Mammary epithelial cell (primary cell): ENCODE measurements at regions of chr11 and their contacts with region 1.

Region 1: DNA sequence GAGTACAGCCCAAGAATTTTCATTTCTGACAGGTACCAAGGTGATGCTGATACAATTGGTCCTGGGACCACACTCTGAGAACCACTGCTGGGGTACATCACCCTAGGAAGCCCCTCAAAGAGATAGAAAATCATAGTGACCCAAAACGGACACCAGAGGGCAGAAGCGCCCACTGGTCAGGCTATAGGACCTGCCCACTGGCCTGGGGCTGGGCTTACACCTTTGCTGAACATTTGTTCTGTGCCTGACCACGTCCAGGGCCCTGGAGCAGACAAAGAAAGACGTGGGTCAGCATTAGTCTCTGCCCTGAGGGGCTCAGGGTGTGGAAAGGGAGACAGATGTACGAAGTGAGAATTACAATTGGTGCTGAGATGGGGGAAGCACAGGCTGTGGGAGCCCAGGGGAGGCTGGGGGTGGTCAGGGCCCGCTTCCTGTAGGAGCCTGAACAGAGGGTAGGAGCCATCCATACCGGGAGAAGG is 14.4 kb upstream of the SERPINH1 start:
- DNase-seq: no peak
- H3K4me3 ChIP-seq: no peak overlapping the region
- H3K27ac ChIP-seq: no peak overlapping the region
- H3K4me1 ChIP-seq: no peaks in the 10 kb centered on the region
- H3K27me3 ChIP-seq: no peaks in the 10 kb centered on the region
- CTCF ChIP-seq: peak; percentile 76 to 90

Region 2: DNA sequence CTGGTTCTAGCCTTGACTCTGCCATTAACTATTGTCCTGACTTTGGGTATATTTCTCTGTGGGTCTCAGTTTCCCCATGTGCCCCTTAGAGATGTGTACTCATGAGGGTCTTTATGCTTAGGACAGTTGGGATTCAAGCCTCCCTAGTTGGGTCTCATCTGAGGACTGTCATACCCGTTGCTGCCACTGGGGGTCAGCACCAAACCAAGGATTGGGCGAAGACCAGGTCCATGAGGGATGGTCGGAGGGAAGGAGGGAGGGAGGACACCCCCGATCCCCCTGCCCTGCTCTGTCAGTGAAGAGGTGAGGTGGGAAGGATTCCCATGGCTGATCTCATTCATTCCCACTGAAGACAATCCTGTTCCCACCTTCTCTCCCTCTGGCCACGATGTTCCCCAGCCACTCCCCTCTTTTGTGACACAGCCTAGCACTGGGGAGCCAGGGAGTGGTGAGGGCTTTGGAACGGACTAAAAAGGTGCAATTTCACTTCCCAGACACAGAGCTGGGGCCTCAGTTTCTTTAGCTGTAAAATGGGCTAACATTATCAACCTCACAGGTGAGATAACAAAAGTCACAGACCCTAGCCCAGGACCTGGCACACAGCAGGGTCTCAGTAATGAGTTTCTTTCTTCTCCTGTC is 102.2 kb before region 1 on chr11:
- CTCF ChIA-PET with region 1: no interaction called
- dilution Hi-C with region 1: no loop called
- in situ Hi-C with region 1: no loop called
- intact Hi-C with region 1: no loop called
- DNase-seq: peak; percentile 27
- H3K4me3 ChIP-seq: no peak overlapping the region
- H3K27ac ChIP-seq: no peak overlapping the region
- H3K4me1 ChIP-seq: peaks cover 8% of the 10 kb centered on the region
- H3K27me3 ChIP-seq: no peaks in the 10 kb centered on the region
- CTCF ChIP-seq: peak; percentile 92 to 98

Region 3: DNA sequence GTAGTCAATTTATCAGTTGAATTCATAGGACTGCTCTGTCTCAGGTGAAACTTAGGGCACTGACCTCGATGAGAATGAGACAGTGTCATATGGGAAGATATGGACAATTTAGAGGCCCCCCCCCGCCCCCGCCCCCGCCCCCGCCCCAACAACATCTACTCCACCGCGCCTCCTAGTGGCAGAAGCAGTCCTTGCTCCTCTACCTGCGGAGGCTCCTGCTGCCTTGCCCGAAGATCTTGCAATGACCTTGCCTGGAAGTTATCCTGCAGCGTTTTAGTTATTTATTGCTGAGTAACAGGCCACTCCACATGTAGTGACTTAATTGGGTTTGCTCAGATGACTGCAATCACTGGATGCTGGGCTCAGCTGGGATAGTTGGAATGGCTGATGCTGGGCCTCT is 29.6 kb after region 1 on chr11:
- CTCF ChIA-PET with region 1: interaction called, 3 read pairs
- dilution Hi-C with region 1: no loop called
- in situ Hi-C with region 1: no loop called
- intact Hi-C with region 1: loop called (anchors 1 kb)
- DNase-seq: no peak
- H3K4me3 ChIP-seq: no peak overlapping the region
- H3K27ac ChIP-seq: no peak overlapping the region
- H3K4me1 ChIP-seq: no peaks in the 10 kb centered on the region
- H3K27me3 ChIP-seq: no peaks in the 10 kb centered on the region
- CTCF ChIP-seq: peak; percentile 50 to 57

Region 4: DNA sequence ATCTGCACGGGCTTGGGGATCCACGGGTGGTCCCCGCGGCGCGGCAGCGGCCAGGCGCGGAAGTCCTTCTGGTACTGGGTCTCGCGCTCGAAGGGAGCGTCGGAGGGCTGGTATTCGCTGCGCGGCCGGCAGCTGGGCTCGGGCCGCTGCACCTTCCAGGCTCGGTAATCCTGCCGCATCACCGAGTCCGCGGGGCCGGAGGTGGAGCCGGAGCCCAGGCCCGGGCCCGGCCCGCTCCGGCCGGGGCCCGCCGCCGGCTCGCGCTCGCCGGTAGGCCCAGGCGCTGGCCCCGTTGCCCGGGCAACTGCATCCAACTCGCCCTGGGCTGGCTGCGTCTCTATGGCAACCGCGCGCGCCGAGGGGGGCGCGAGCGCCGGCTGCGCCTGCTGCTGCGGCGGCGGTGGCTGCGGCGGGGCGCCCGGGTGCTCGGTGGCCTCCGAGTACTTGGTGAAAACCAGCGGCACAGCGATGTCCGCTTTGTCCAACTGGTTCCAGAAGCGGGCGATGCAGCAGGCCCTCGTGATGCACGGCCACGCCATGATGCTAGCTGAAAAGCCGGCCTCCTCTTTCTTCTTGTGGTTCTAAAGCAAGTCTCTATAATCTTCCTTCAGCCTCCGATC is 120.3 kb after region 1 on chr11:
- CTCF ChIA-PET with region 1: no interaction called
- dilution Hi-C with region 1: no loop called
- in situ Hi-C with region 1: no loop called
- intact Hi-C with region 1: loop called (anchors 2 kb)
- DNase-seq: peak; percentile 8
- H3K4me3 ChIP-seq: peak overlapping the region; percentile 25 to 53 (median 44)
- H3K27ac ChIP-seq: no peak overlapping the region
- H3K4me1 ChIP-seq: peaks cover 16% of the 10 kb centered on the region
- H3K27me3 ChIP-seq: peaks cover 6% of the 10 kb centered on the region
- CTCF ChIP-seq: no peak

Region 5: DNA sequence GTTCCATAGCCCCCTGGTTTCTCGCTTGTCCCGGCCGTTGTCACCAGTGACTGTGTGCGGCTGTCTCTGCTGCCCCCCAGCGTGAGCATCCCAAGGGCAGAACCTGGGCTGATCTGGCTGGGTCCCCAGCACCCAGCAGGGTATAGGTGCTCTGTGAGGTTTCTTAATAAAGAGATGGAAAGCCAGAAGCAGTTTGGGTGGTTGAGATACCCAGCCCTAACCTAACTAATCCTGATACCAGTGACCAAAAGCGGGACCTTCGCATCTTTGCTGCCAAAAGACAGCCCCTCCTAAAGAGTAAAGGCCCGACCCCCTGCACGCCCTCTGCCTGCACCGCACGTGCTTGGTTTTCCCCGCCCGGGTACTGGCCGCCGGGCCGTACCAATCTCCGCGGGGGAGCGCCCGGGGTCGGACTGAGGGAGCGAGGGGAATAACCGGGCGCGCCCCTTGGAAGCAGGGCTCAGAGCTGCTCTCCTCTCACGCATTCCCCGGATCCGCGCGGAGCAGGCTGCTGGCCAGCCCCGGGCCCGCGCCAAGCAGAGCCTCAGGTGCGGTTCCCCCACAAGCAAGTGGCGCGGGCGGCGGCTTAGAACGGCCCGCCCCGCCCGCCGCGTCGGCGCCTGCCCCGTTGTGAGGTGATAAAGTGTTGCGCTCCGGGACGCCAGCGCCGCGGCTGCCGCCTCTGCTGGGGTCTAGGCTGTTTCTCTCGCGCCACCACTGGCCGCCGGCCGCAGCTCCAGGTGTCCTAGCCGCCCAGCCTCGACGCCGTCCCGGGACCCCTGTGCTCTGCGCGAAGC is 220.7 kb after region 1 on chr11 and contains the start of gene DGAT2:
- CTCF ChIA-PET with region 1: no interaction called
- dilution Hi-C with region 1: no loop called
- in situ Hi-C with region 1: no loop called
- intact Hi-C with region 1: loop called (anchors 1 kb)
- DNase-seq: peak; percentile 63
- H3K4me3 ChIP-seq: peak within 1 kb of the TSS; percentile 36 to 54 (median 44)
- H3K27ac ChIP-seq: no peak within 1 kb of the TSS
- H3K4me1 ChIP-seq: peaks cover 24% of the 10 kb centered on the region
- H3K27me3 ChIP-seq: peaks cover 6% of the 10 kb centered on the region
- CTCF ChIP-seq: peak in 1 of 2 donors; percentile 10
- total RNA-seq, gene DGAT2: 2.0 to 2.6 TPM

Region 6: DNA sequence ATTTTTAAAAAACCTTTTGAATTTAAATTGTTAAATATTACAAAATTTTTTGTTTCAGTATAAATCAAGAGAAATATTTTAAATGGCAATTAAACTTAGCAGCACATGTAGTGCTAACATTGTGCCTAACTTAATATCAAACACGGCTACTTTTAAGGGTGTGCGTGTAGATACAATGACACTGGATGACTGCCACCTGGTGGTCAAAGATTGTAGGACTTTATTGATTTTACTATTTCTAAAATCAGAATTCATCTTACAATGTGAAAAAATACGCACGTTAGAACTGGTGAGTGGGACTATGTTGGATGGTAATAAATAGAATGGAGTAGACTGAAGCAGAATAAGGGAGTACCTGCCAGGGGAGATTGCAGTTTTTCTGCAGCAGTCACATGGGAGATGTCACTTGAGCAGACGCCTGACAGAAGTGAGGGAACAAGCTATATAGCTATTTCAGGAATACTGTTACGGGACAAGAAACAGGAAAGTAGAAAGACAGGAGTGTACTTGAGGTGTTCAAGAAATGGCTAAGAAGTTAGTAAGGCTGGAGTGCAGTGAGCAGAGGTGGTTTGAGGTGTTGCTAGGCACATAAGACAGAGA is 320.3 kb after region 1 on chr11:
- CTCF ChIA-PET with region 1: no interaction called
- dilution Hi-C with region 1: no loop called
- in situ Hi-C with region 1: no loop called
- intact Hi-C with region 1: loop called (anchors 5 kb)
- DNase-seq: peak; percentile 11
- H3K4me3 ChIP-seq: no peak overlapping the region
- H3K27ac ChIP-seq: no peak overlapping the region
- H3K4me1 ChIP-seq: no peaks in the 10 kb centered on the region
- H3K27me3 ChIP-seq: no peaks in the 10 kb centered on the region
- CTCF ChIP-seq: peak; percentile 67 to 72

Region 7: DNA sequence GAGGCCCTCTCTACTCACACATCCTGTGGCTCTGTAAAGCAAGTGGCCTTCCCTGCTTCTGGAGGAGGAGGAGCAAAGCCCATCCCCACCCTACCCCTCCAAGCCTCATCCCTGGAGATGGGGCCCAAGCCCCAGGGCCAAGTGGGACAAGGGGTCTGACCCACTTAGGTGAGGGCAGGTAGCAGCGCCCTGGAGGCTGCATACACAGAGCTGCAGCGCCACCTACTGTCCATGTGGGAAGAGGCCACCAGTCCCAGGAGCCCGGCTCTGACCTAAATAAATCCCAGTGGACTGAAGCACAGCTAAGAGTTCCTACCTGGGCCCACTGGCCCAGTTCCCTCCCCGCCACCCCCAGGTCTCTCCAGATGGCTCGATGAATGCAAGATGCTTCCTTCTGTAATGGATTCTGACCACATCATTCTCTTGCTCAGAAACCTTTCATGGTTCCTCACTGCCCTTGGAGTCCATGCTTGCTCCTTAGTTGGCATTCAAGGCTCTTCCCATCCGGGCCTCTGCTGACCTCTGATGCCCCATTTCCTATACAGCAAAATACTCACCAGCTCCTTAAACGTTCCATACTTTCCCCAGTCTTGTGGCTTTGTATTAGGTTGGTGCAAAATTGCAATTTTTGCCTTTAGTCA is 771.2 kb after region 1 on chr11:
- CTCF ChIA-PET with region 1: no interaction called
- dilution Hi-C with region 1: no loop called
- in situ Hi-C with region 1: no loop called
- intact Hi-C with region 1: loop called (anchors 2 kb)
- DNase-seq: peak; percentile 46
- H3K4me3 ChIP-seq: no peak overlapping the region
- H3K27ac ChIP-seq: no peak overlapping the region
- H3K4me1 ChIP-seq: peaks cover 17% of the 10 kb centered on the region
- H3K27me3 ChIP-seq: no peaks in the 10 kb centered on the region
- CTCF ChIP-seq: peak; percentile 84 to 97